ENCODE measurements at regions of chr17 and their contacts with region 1.

Region 1: DNA sequence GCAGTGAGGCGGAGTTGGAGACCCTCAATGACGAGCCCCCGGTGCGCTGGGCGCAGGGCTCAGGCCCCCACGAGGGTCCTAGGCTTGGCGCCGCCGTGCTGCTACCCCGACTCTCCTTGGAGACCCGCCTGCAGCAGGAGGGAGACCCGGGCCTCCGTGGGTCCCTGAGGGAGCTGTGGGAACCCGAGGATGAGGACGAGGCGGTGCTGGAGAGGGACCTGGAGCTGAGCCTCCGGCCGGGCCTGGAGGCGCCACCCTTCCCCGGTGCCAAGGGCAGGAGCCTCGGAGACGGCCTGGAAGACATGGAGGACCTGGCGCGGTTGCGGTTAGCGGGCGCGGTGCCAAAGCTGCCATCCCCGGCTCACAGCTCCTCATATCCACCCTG is 2.3 kb downstream of the MYO15B start:
- DNase-seq: no peak
- H3K4me3 ChIP-seq: no peak overlapping the region
- H3K27ac ChIP-seq: no peak overlapping the region
- H3K4me1 ChIP-seq: no peaks in the 10 kb centered on the region
- H3K27me3 ChIP-seq: peaks cover 20% of the 10 kb centered on the region; the same call in 1 of the 2 replicates

Region 2: GRCh38 chr17:74842599-74843351 is 747.1 kb before region 1 on chr17:
- in situ Hi-C with region 1: no loop called
- DNase-seq: peak; percentile 85
- H3K4me3 ChIP-seq: peak overlapping the region; percentile 44
- H3K27ac ChIP-seq: no peak overlapping the region
- H3K4me1 ChIP-seq: peaks cover 6% of the 10 kb centered on the region
- H3K27me3 ChIP-seq: no peaks in the 10 kb centered on the region

Region 3: DNA sequence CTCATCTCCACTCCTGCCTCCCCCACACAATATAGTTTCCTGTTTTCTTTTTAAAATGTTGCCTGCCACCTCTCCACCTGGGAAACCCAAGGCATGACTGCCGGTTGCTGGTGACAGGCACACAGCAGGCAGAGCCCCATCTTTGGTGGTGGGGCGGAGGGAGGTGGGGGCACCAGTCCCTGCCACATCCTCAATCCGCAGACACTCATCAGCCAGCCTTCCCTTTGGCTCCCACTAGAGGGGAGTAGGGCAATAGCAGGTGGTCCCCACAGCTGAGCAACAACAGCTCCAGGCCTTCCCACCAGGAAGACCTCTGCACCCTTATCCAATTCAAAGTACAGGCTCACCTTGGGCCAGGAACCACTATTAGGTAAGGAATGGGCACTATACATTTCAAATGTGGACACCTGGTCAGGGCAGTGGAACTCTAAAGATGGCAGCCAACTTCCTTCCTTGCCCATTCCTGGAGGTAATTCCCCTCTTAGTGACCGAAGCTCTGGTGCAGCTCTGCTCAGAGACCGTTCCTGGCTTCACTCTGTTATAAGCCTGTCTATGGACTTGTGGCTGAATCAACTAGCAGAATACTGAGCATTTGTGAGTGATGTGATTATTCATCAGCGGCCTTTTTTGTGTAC is 63.1 kb after region 1 on chr17:
- in situ Hi-C with region 1: loop called (anchors 10 kb)
- DNase-seq: peak; percentile 54
- H3K4me3 ChIP-seq: no peak overlapping the region
- H3K27ac ChIP-seq: no peak overlapping the region
- H3K4me1 ChIP-seq: no peaks in the 10 kb centered on the region
- H3K27me3 ChIP-seq: no peaks in the 10 kb centered on the region

Measured in GM23248 (cell line).